Lower leg skin (tissue), 4 donors: ENCODE measurements at regions of chr16 and their contacts with region 1.

Region 1: DNA sequence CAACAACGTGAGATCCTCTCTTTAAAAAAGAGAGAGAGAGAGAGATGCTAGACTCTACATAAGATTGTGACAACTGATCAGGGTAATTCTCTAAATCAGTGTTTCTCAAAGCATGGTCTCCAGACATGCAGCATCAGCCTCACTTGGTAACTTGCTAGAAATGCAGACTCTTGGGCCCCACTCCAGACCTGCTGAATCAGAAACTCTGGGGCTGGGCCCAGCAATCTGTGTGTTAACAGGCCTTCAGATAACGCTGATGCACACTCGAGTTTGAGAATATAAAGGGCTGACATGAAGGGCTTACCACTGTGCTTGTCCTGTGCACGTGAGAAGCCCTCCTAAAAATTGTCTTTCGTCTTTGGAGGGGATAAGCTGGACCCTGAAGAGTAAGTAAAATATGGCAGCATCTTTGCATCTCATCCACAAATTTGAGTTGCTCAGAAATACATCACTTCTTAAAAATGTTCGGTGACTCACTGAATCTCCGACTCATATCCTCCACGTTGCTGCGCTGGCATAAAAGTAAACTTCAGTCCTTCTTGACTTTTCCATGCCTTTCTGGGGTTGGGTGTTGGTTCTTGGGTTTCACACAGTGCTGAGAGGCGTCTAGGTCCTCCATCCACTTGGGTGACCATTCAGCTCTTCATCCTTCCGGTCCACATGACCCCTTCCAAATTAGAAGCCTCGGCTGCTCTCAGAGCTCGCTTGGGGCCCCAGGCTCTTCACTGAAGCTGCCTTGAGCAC is 26.1 kb upstream of the KDM8 start:
- DNase-seq: no peak
- H3K4me3 ChIP-seq: no peak overlapping the region
- CTCF ChIP-seq: no peak
- POLR2A ChIP-seq: no peak

Region 2: DNA sequence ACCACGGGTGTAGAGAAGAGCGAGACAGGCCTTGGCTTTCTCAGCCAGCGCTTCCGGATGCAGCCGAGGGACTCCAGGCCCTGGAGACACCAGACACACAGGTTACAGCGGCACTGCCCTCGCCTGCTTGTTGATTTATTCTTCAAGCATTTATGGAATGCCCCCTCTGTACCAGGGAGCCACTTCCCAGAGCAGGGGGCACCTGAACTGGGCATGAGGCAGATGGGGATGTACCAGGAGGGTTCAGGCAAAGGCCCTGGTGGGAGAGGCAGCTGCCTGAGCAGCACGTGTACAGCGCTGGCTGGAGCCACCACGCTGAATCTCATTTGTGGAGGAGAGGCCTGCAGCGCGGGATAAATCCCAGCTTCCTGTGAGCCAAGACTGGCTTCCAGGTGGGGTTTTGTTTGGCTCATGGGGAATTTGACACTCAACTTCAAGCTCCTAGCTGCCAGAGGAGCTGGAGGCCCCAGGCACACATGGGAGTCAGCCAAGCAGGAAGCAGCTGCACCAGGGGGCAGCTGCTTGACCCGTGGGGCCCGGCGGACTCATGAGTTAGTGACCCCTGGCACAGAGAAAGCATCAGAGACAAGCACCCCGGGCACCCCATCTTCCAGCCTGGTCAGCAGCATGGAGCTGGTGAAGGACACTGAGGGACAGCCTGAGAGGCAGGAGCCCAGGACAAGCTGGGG is 284.4 kb after region 1 on chr16:
- intact Hi-C with region 1: loop called (anchors 1 kb)
- DNase-seq: no peak
- H3K4me3 ChIP-seq: no peak overlapping the region
- CTCF ChIP-seq: no peak
- POLR2A ChIP-seq: no peak